Panc1 (cell line): ENCODE measurements at regions of chr5 and their contacts with region 1.

Region 1: DNA sequence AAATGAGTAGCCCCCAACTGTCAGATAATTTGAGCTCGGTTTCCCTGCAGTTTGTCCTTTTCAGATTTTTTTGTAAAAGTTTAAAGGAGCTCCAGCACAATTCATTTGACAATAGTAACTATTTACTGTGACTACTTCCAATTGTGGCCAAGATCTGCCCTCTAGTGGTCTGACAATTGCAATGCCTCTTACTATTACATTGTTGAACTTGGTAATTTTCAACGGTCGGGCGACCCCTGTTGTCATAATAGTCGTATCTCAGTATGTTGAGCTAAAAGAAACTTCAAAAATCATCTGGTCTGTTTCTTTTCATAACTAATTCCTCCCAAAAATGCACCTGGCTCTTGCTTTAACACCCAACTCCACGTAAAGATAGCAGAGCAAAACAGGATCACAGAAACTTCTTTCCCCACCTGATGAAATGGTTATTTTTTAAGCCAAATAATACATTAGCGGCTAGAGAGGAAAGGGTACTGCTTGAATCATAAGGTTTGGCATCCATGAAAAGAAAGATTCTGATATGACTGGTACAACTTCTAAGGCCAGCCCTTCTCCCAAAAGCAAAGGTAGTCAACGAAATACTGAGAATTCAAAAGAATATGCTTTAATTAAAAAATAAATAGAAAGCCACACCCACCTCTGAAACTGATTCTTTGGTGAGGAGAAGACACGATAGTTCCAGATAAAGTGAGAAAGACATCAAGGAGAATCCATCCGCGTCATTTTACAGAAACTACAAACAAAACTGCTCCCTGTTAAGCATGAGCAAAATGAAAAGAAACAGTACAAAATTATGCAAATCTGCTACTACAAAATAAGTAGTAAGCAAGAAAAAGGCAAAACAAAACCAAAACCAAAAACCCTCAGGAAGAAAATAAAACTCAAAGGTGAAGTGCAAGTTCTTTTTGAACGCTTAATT is 76.9 kb upstream of the HTR4 start:
- DNase-seq: peak; percentile 77
- ATAC-seq: peak; percentile 90
- H3K4me3 ChIP-seq: peak overlapping the region; percentile 9 to 39; a peak in 3 of 4 replicates
- H3K27ac ChIP-seq: no peak overlapping the region
- H3K4me1 ChIP-seq: peaks cover 6% of the 10 kb centered on the region
- H3K27me3 ChIP-seq: peaks cover 10% of the 10 kb centered on the region; the same call in 1 of the 2 replicates
- CTCF ChIP-seq: peak; percentile 92

Region 2: DNA sequence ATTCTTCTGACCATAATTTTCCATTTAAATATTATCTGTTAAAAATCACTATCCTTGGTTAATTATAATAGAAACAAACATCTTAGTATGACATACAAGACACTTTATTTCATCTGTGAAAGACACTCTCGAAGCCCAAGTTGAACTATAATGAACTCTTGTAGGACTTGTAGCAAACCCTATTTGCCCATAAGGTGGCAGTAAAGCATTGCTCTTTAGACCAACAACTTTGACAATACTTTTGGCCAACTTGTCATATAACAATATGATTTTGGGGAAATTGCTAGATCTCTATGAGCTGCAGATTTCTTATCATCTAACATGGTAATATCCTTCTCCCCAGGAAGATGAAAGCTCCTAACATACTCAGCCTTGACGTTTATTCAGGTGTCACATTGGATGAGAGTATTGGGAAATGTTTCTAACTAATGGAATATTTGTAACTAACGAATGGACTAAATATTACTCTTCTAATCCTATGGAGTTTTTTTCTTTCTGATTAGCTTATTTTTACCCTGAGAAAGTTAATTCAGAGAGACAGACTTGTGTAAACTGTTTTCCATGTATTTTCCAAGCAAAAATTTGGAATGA is 551.9 kb before region 1 on chr5:
- CTCF ChIA-PET with region 1: no interaction called
- POLR2A ChIA-PET with region 1: no interaction called
- in situ Hi-C with region 1: no loop called
- intact Hi-C with region 1: loop called (anchors 1 kb)
- DNase-seq: peak; percentile 45
- ATAC-seq: peak; percentile 63; the same call in 1 of the 2 replicates
- H3K4me3 ChIP-seq: no peak overlapping the region
- H3K27ac ChIP-seq: no peak overlapping the region
- H3K4me1 ChIP-seq: no peaks in the 10 kb centered on the region
- H3K27me3 ChIP-seq: no peaks in the 10 kb centered on the region
- CTCF ChIP-seq: peak; percentile 67; the same call in 1 of the 2 replicates

Region 3: GRCh38 chr5:148864113-148864841 is 133.1 kb after region 1 on chr5:
- CTCF ChIA-PET with region 1: no interaction called
- POLR2A ChIA-PET with region 1: no interaction called
- in situ Hi-C with region 1: no loop called
- intact Hi-C with region 1: no loop called
- DNase-seq: no peak
- ATAC-seq: no peak
- H3K4me3 ChIP-seq: no peak overlapping the region
- H3K27ac ChIP-seq: no peak overlapping the region
- H3K4me1 ChIP-seq: no peaks in the 10 kb centered on the region
- H3K27me3 ChIP-seq: no peaks in the 10 kb centered on the region
- CTCF ChIP-seq: no peak

Region 4: GRCh38 chr5:149035372-149035790 is 304.2 kb after region 1 on chr5:
- CTCF ChIA-PET with region 1: interaction called, 34 read pairs
- POLR2A ChIA-PET with region 1: no interaction called
- in situ Hi-C with region 1: no loop called
- intact Hi-C with region 1: loop called (anchors 1 kb)
- DNase-seq: peak; percentile 71
- ATAC-seq: peak; percentile 98
- H3K4me3 ChIP-seq: no peak overlapping the region
- H3K27ac ChIP-seq: no peak overlapping the region
- H3K4me1 ChIP-seq: no peaks in the 10 kb centered on the region
- H3K27me3 ChIP-seq: no peaks in the 10 kb centered on the region
- CTCF ChIP-seq: peak; percentile 91

Region 5: GRCh38 chr5:149268928-149269557 is 537.8 kb after region 1 on chr5:
- CTCF ChIA-PET with region 1: no interaction called
- POLR2A ChIA-PET with region 1: no interaction called
- in situ Hi-C with region 1: no loop called
- intact Hi-C with region 1: loop called (anchors 5 kb)
- DNase-seq: no peak
- ATAC-seq: no peak
- H3K4me3 ChIP-seq: no peak overlapping the region
- H3K27ac ChIP-seq: no peak overlapping the region
- H3K4me1 ChIP-seq: peaks cover 10% of the 10 kb centered on the region; the same call in 1 of the 2 replicates
- H3K27me3 ChIP-seq: no peaks in the 10 kb centered on the region
- CTCF ChIP-seq: peak; percentile 78